Activated naive CD4-positive, alpha-beta T cell treated with anti-CD3 and anti-CD28 coated beads, Interleukin-2, amount 10 ng/mL, durations not matched to agents 7 days and 5 days (primary cell): ENCODE measurements at regions of chr12 and their contacts with region 1.

Region 1: GRCh38 chr12:130335517-130336392 is 1.9 kb upstream of the PIWIL1 start:
- DNase-seq: peak; percentile 38
- H3K4me3 Mint-ChIP-seq: no peak overlapping the region
- H3K27ac Mint-ChIP-seq: no peak overlapping the region
- H3K4me1 Mint-ChIP-seq: peaks cover 7% of the 10 kb centered on the region
- H3K27me3 Mint-ChIP-seq: peaks cover 37% of the 10 kb centered on the region

Region 2: DNA sequence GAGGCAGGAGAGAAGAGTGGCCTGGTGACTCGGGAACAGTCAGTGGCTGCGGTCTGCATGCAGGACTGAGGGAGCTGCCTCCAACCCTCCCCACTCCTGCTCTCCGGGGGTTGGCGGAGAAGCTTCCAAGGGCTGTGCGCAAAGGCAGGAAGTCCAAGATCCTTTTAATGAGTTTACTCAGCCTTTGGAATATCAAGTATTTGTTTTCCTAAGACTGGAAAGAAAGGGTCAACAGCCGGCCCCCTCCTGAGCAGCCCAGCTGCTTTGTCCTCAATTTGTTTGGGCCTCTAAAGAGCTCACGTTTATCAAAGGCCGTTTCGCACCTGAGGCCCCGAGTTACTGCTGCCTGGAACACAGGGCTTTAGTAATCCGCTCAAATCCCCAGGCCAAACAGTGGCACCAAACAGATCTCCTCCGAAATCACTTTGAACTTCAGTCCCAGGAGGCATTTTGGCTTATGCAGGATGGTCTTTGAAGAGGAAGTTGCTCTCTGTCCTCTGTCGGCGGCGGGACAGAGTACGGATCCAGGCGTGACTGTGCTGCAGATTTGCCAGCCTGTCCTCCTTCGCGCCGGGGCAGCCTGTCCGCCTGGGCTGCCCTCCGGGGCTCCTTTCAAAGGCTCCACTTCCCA is 290.6 kb before region 1 on chr12:
- CTCF ChIA-PET with region 1: interaction called, 23 read pairs
- DNase-seq: no peak
- H3K4me3 Mint-ChIP-seq: no peak overlapping the region
- H3K27ac Mint-ChIP-seq: no peak overlapping the region
- H3K4me1 Mint-ChIP-seq: peaks cover 11% of the 10 kb centered on the region
- H3K27me3 Mint-ChIP-seq: peaks cover 48% of the 10 kb centered on the region

Region 3: DNA sequence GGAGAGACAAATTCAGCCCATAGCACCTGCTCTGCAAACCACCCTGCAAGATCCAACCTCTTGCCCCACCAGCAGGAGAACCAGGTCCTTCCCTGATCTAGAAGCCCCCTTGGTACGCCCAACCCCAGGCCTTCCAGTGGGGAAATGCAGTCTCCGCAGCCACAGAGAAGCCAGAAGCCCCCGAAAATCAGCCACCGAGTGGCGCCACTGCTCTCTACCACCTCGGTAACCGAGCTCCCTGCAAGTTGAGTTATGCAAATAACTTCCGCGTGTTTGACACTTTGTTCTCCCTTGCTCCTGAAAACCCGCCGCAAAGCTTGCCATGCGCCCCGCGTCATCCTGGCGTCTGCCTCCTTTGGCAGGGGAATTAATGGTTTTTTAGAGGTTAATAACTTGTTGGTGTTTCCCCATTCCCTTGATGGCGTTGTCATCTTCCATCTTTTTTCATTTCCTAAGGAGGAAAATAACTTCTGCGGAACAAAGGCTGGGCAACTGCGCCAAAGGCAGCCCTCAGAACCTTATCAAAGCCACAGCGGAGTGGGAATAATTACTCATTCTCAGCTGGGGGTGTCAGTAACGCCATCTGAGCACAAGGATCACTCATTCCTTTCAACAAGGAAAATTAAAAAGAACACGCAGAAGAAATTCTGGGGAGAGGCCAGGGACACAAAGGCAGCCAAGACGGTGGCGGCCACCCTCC is 113.1 kb before region 1 on chr12:
- CTCF ChIA-PET with region 1: no interaction called
- DNase-seq: no peak
- H3K4me3 Mint-ChIP-seq: no peak overlapping the region
- H3K27ac Mint-ChIP-seq: no peak overlapping the region
- H3K4me1 Mint-ChIP-seq: no peaks in the 10 kb centered on the region
- H3K27me3 Mint-ChIP-seq: peaks cover 16% of the 10 kb centered on the region

Region 4: GRCh38 chr12:130351326-130351725 is 15.6 kb after region 1 on chr12:
- CTCF ChIA-PET with region 1: no interaction called
- DNase-seq: no peak
- H3K4me3 Mint-ChIP-seq: no peak overlapping the region
- H3K27ac Mint-ChIP-seq: no peak overlapping the region
- H3K4me1 Mint-ChIP-seq: no peaks in the 10 kb centered on the region
- H3K27me3 Mint-ChIP-seq: peaks cover 5% of the 10 kb centered on the region

Region 5: DNA sequence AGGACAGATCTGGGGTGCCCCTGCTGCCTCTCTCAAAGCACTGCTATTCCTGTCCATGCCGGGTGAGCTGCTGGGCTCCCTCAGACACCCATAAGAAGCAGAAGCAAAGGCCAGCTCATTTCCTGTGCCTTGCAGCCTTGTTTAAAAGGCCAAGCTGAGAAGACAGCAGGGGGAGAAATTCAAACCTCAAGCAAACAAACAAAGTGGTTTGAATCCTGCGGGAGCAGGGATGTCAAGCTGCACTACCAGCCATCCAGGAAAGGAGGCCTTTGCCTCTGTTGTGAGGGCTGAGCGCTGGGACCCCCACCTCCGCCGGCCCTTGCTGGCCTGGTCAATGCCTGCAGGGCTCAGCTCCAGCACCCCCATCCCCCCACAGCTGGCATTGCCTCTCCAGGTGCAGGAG is 178.4 kb after region 1 on chr12:
- CTCF ChIA-PET with region 1: no interaction called
- DNase-seq: no peak
- H3K4me3 Mint-ChIP-seq: no peak overlapping the region
- H3K27ac Mint-ChIP-seq: no peak overlapping the region
- H3K4me1 Mint-ChIP-seq: no peaks in the 10 kb centered on the region
- H3K27me3 Mint-ChIP-seq: no peaks in the 10 kb centered on the region

Region 6: GRCh38 chr12:130775953-130776856 is 440.4 kb after region 1 on chr12:
- CTCF ChIA-PET with region 1: no interaction called
- DNase-seq: peak; percentile 46
- H3K4me3 Mint-ChIP-seq: peak overlapping the region; percentile 3
- H3K27ac Mint-ChIP-seq: no peak overlapping the region
- H3K4me1 Mint-ChIP-seq: peaks cover 14% of the 10 kb centered on the region
- H3K27me3 Mint-ChIP-seq: peaks cover 40% of the 10 kb centered on the region